ENCODE measurements at regions of chr6 and their contacts with region 1.

Region 1: GRCh38 chr6:110389689-110390382 is 25.5 kb downstream of the DDO start:
- DNase-seq: no peak
- H3K4me3 ChIP-seq: no peak overlapping the region
- H3K27ac ChIP-seq: no peak overlapping the region
- H3K4me1 ChIP-seq: peaks cover 0 to 3% (median 0%) of the 10 kb centered on the region in 4 donors
- H3K27me3 ChIP-seq: no peaks in the 10 kb centered on the region
- CTCF ChIP-seq: no peak
- EP300 ChIP-seq: no peak
- POLR2A ChIP-seq: no peak

Region 2: GRCh38 chr6:110179401-110180227 is 210.2 kb before region 1 on chr6 and contains the start of gene WASF1:
- in situ Hi-C with region 1: loop called in 3 of 4 experiments (anchors 10 to 25 kb)
- intact Hi-C with region 1: loop called (anchors 2 kb)
- DNase-seq: peak; percentile 94
- H3K4me3 ChIP-seq: peak within 1 kb of the TSS; percentile 73 to 84 (median 80)
- H3K27ac ChIP-seq: peak within 1 kb of the TSS; percentile 86 to 90 (median 88)
- H3K4me1 ChIP-seq: peaks cover 14 to 46% (median 30%) of the 10 kb centered on the region in 4 donors
- H3K27me3 ChIP-seq: peaks cover 3% of the 10 kb centered on the region
- CTCF ChIP-seq: no peak
- EP300 ChIP-seq: no peak
- POLR2A ChIP-seq: no peak
- total RNA-seq, gene WASF1: 1.9 to 7.1 (median 5.9) TPM

Region 3: GRCh38 chr6:110341663-110342596 is 47.9 kb before region 1 on chr6:
- in situ Hi-C with region 1: no loop called
- intact Hi-C with region 1: loop called (anchors 2 kb)
- DNase-seq: no peak
- H3K4me3 ChIP-seq: no peak overlapping the region
- H3K27ac ChIP-seq: peak overlapping the region in 3 of 4 donors; percentile 8 to 68 (median 44)
- H3K4me1 ChIP-seq: peaks cover 0 to 8% (median 0%) of the 10 kb centered on the region in 4 donors
- H3K27me3 ChIP-seq: no peaks in the 10 kb centered on the region
- CTCF ChIP-seq: peak; percentile 21 to 31 (median 24)
- EP300 ChIP-seq: no peak
- POLR2A ChIP-seq: no peak

Measured in transverse colon (tissue), 4 donors.